H1 (cell line): ENCODE measurements at regions of chr17 and their contacts with region 1.

Region 1: GRCh38 chr17:4672055-4672630 is 30.7 kb upstream of the ALOX15 start:
- DNase-seq: no peak
- H3K4me3 ChIP-seq: no peak overlapping the region
- H3K27ac ChIP-seq: no peak overlapping the region
- H3K4me1 ChIP-seq: peaks cover 0 to 3% (median 0%) of the 10 kb centered on the region in 4 experiments; a peak in 1 of 7 replicates
- H3K27me3 ChIP-seq: no peaks in the 10 kb centered on the region
- CTCF ChIP-seq: no peak
- EP300 ChIP-seq: no peak
- POLR2A ChIP-seq: no peak
- RAD21 ChIP-seq: no peak

Region 2: DNA sequence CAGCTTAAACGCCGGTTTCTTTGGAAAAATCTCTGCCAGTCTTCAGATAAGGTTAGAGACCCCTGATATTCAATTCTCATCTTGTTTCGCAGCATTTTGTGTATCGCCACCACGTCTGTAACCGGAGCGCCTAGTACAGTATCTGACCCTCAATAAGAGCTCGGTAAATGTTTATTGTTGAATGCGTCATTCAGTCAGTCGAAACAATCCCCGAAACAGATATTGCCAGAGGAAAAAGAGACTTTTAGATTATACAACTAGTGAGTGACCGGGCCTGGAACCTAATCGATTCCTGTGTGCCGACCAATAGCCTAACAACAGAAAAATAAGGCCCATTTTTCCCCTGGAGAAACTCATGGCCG is 31.2 kb after region 1 on chr17:
- CTCF ChIA-PET with region 1: no interaction called
- POLR2A ChIA-PET with region 1: interaction called, 14 read pairs
- DNase-seq: no peak
- H3K4me3 ChIP-seq: peak overlapping the region; percentile 91 to 98 (median 94)
- H3K27ac ChIP-seq: peak overlapping the region; percentile 87
- H3K4me1 ChIP-seq: peaks cover 0 to 20% (median 10%) of the 10 kb centered on the region in 4 experiments; a peak in 6 of 7 replicates
- H3K27me3 ChIP-seq: no peaks in the 10 kb centered on the region
- CTCF ChIP-seq: no peak
- EP300 ChIP-seq: no peak
- POLR2A ChIP-seq: no peak
- RAD21 ChIP-seq: no peak